ENCODE measurements at regions of chr6 and their contacts with region 1.

Region 1: GRCh38 chr6:73520688-73521350 is at the start of gene EEF1A1:
- DNase-seq: peak; percentile 100
- ATAC-seq: peak; percentile 80
- H3K4me3 ChIP-seq: peak within 1 kb of the TSS; percentile 84
- H3K27ac ChIP-seq: peak within 1 kb of the TSS; percentile 97
- H3K4me1 ChIP-seq: peaks cover 9% of the 10 kb centered on the region
- H3K27me3 ChIP-seq: no peaks in the 10 kb centered on the region
- CTCF ChIP-seq: no peak; the same call in 1 of the 2 replicates
- POLR2A ChIP-seq: peak; percentile 100
- RAD21 ChIP-seq: peak; percentile 27
- total RNA-seq, gene EEF1A1: 28,223 and 30,152 TPM in 2 replicates

Region 2: GRCh38 chr6:72683797-72684196 is 837.0 kb before region 1 on chr6:
- CTCF ChIA-PET with region 1: no interaction called
- POLR2A ChIA-PET with region 1: no interaction called
- dilution Hi-C with region 1: no loop called
- in situ Hi-C with region 1: no loop called
- intact Hi-C with region 1: no loop called
- DNase-seq: no peak
- ATAC-seq: no peak
- H3K4me3 ChIP-seq: no peak overlapping the region
- H3K27ac ChIP-seq: no peak overlapping the region
- H3K4me1 ChIP-seq: no peaks in the 10 kb centered on the region
- H3K27me3 ChIP-seq: no peaks in the 10 kb centered on the region
- CTCF ChIP-seq: no peak
- POLR2A ChIP-seq: no peak
- RAD21 ChIP-seq: no peak

Region 3: GRCh38 chr6:73481969-73482368 is 38.9 kb before region 1 on chr6:
- CTCF ChIA-PET with region 1: no interaction called
- POLR2A ChIA-PET with region 1: no interaction called
- dilution Hi-C with region 1: no loop called
- in situ Hi-C with region 1: no loop called
- intact Hi-C with region 1: no loop called
- DNase-seq: no peak
- ATAC-seq: no peak
- H3K4me3 ChIP-seq: no peak overlapping the region
- H3K27ac ChIP-seq: no peak overlapping the region
- H3K4me1 ChIP-seq: no peaks in the 10 kb centered on the region
- H3K27me3 ChIP-seq: no peaks in the 10 kb centered on the region
- CTCF ChIP-seq: no peak
- POLR2A ChIP-seq: no peak
- RAD21 ChIP-seq: no peak

Region 4: DNA sequence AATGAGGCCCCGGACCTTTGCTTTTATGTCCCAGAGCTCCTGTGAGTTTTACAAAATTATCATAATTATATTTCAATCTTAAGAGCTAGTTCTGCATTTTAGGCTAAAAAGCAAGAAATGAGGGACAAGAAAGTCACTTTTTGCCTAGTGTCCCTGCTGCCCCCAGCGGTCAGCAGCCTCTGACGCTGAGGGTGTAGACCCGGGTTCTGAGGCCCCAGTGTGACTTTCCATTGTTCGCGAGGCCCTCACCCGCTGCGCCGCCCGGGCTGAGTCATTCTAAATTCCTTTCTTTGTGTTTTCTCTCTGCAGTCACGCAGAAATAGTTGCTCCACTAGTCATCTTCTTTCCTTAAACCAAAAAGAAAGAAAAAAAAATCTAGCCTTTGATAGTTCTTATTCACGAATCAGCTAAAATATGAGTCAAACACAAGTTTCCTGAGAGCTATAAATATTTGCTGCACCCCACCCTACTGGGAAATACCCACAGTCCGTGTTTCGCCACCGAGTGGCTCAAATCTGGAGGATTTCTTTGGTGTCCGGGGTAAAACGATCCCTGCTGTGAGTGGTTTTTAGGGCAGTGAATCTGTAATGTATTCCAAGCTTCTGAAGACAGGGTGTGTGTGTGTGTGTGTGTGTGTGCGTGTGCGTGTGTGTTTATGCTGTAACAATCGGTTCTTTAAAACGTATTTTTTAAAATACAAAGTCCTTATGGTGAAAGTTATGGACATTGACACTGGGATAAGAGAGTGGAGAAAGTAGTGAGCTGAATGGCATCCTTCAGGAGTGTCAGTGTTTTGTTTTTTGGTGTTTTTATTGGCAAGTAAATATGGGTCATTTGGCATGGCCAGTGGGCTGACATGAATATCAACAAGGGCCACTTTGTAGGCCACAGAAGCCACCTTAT is 59.7 kb after region 1 on chr6:
- CTCF ChIA-PET with region 1: interaction called, 3 read pairs
- POLR2A ChIA-PET with region 1: interaction called, 35 read pairs
- dilution Hi-C with region 1: no loop called
- in situ Hi-C with region 1: loop called (anchors 5 kb)
- intact Hi-C with region 1: loop called (anchors 1 kb)
- DNase-seq: peak; percentile 98
- ATAC-seq: peak; percentile 87
- H3K4me3 ChIP-seq: peak overlapping the region; percentile 36
- H3K27ac ChIP-seq: peak overlapping the region; percentile 98
- H3K4me1 ChIP-seq: peaks cover 14% of the 10 kb centered on the region
- H3K27me3 ChIP-seq: no peaks in the 10 kb centered on the region
- CTCF ChIP-seq: peak; percentile 46
- POLR2A ChIP-seq: peak; percentile 95
- RAD21 ChIP-seq: peak; percentile 33; the same call in 1 of the 2 replicates

Region 5: DNA sequence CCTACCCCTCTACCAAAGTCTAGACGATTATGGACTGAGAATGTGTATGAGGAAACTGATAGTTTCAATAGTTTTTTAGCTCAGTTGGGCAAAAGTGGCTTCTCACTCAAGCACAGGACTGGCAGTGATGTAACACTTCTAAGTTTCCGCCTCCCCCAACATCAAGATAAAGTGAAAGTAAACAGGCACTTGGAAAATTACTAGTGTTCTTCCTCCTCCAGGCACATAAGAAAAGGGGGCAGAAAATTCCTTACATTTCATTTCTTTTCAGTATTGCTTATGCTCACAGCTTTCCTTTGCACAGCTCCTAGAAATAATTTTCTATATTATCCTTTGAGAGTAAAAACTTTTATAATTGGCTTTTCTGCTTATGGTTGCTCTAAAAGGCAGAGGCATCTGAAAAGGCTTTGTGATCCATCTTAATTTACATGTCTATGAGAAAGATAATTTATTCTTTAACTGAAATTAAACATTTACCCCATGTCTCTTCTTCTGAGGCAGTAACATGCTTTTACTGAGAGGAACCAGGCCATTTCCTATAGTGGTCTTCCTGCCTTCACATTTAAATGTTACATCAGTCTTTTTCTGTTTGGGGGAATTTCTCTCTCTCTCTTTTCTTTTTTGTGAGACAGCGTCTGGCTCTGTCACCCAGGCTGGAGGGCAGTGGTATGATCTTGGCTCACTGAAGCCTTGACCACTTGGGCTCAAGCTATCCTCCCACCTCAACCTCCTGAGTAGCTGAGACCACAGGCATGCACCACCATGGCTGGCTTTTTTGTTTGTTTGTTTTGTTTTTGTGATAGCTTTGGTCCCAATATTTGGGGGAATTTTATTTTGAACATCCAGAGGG is 65.0 kb after region 1 on chr6:
- CTCF ChIA-PET with region 1: interaction called, 3 read pairs
- POLR2A ChIA-PET with region 1: interaction called, 35 read pairs
- dilution Hi-C with region 1: no loop called
- in situ Hi-C with region 1: loop called (anchors 5 kb)
- intact Hi-C with region 1: loop called (anchors 1 kb)
- DNase-seq: peak; percentile 85
- ATAC-seq: peak; percentile 76
- H3K4me3 ChIP-seq: peak overlapping the region; percentile 29; the same call in 1 of the 2 replicates
- H3K27ac ChIP-seq: peak overlapping the region; percentile 96
- H3K4me1 ChIP-seq: peaks cover 7% of the 10 kb centered on the region
- H3K27me3 ChIP-seq: no peaks in the 10 kb centered on the region
- CTCF ChIP-seq: no peak
- POLR2A ChIP-seq: peak; percentile 39; the same call in 1 of the 2 replicates
- RAD21 ChIP-seq: no peak

Region 6: GRCh38 chr6:73610444-73611275 is 89.8 kb after region 1 on chr6:
- CTCF ChIA-PET with region 1: interaction called, 3 read pairs
- POLR2A ChIA-PET with region 1: interaction called, 7 read pairs
- dilution Hi-C with region 1: no loop called
- in situ Hi-C with region 1: no loop called
- intact Hi-C with region 1: loop called (anchors 1 kb)
- DNase-seq: peak; percentile 66
- ATAC-seq: peak; percentile 91
- H3K4me3 ChIP-seq: no peak overlapping the region
- H3K27ac ChIP-seq: peak overlapping the region; percentile 25; the same call in 1 of the 2 replicates
- H3K4me1 ChIP-seq: no peaks in the 10 kb centered on the region; the same call in 1 of the 2 replicates
- H3K27me3 ChIP-seq: no peaks in the 10 kb centered on the region
- CTCF ChIP-seq: peak; percentile 75
- POLR2A ChIP-seq: no peak
- RAD21 ChIP-seq: peak; percentile 71

Region 7: DNA sequence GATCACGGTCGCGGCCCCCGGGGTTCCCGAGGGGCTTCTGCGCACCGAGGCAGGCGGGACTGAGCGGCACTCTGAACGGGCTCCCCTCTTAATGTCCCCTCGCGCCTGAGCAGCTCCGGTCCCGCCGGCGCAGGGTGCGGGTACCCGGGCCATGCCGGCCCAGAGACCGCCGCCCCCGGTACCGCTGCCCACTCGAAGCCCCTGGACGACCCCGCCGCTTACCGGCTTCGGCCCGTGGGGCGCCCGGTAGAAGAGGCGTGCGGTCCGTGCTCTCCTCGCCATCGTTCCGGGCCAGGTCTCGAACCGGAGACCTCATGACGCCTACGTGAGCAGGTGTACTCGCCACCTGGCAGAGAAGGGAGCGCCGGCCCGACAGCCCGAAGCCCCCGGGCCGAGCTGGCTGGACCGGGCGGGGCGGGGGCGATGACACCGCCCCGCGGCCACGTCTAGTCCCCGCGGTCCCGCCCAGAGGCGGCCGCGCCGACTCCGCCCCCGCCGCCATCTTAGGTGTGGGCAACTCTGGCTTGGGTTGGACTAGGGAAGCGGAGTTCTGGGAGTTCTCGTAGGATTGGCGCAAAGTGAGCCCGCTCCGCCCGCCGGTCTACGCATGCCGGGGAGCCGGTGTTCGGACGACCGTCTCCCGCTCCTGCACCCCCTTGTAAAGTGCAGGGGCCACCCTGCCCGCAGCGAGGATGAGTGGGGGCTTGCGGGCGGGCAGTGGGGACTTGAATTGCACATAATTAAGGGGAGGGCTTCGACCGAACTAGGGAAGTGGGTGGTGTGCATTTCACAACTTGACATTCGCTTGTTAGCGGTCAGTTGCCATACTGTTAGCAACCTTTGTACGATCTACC is 133.0 kb after region 1 on chr6 and contains the start of gene SLC17A5:
- CTCF ChIA-PET with region 1: no interaction called
- POLR2A ChIA-PET with region 1: interaction called, 3 read pairs
- dilution Hi-C with region 1: no loop called
- in situ Hi-C with region 1: no loop called
- intact Hi-C with region 1: loop called (anchors 2 kb)
- DNase-seq: peak; percentile 92
- ATAC-seq: peak; percentile 98
- H3K4me3 ChIP-seq: peak within 1 kb of the TSS; percentile 78
- H3K27ac ChIP-seq: peak within 1 kb of the TSS; percentile 88
- H3K4me1 ChIP-seq: peaks cover 3% of the 10 kb centered on the region; the same call in 1 of the 2 replicates
- H3K27me3 ChIP-seq: no peaks in the 10 kb centered on the region
- CTCF ChIP-seq: no peak
- POLR2A ChIP-seq: peak; percentile 83
- RAD21 ChIP-seq: no peak
- total RNA-seq, gene SLC17A5: 27.2 and 37.5 TPM in 2 replicates